B cell (primary cell): ENCODE measurements at regions of chr2 and their contacts with region 1.

Region 1: DNA sequence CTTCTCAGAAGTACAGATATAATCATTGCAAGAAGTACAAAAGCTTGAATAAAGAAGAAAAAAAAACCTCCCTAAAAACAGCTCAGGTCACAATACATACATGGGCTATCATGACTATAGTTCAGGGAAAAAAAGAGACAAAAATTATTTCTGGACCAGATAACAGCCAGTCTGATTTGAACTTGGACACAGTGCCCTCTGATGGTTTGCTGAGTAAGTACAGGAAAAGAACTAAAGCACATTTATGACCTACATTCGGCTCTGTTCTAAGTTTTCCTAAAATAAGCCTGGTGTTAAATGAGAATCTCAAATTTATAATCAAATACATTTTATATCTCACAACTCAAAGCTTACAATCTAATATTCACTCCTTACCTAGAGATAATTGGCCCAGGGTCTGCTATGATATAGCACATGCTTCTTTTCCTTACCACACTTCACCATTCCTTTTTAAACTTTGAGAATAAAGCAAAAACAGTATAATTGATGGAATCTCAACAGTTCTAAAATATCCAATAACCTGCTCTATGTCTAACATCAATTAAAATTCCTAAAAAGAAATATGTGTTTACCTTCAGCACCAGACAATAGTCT is 81.1 kb downstream of the RAPH1 start:
- DNase-seq: peak; percentile 46
- ATAC-seq: no peak
- H3K4me3 ChIP-seq: no peak overlapping the region
- H3K4me3 Mint-ChIP-seq: no peak overlapping the region
- H3K27ac ChIP-seq: no peak overlapping the region
- H3K27ac Mint-ChIP-seq: no peak overlapping the region
- H3K4me1 ChIP-seq: no peaks in the 10 kb centered on the region
- H3K4me1 Mint-ChIP-seq: no peaks in the 10 kb centered on the region
- H3K27me3 ChIP-seq: no peaks in the 10 kb centered on the region
- H3K27me3 Mint-ChIP-seq: no peaks in the 10 kb centered on the region
- CTCF ChIP-seq: peak; percentile 84

Region 2: DNA sequence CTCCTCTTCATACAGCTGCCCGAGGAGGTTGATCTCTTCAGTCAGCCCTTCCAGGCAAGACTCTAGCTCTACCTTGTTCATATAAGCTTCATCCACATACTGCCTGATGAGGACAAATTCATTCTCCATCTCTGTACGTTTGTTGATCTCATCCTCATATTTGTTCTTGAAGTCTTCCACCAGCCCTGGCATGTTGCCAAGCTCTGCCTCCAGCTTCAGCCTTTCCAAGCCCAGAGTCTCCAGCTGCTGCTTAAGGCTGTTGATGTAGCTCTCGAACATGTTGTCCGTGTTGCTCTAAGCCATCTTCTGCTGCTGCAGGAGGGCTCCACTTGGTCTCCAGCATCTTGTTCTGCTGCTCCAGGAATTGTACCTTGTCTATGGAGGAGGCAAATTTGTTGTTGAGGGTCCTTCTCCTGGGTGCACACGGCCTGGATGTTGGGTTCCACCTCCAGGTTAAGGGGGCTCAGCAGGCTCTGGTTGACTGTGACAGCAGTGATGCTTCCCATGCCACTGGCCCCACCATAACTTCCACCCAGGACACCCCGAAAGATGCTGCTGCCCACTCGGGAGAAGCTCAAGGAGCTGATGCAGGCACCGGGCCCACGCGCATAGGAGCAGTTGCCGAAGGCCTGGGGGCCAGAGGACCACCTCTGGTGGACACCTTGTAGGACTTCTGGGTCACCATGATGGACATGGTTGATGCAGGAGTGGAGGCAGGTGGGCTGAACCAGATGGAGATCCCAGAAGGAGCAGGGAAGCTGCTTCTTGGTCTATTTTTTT is 612.7 kb before region 1 on chr2:
- CTCF ChIA-PET with region 1: no interaction called
- POLR2A ChIA-PET with region 1: no interaction called
- intact Hi-C with region 1: no loop called
- DNase-seq: no peak
- ATAC-seq: no peak
- H3K4me3 ChIP-seq: no peak overlapping the region
- H3K4me3 Mint-ChIP-seq: no peak overlapping the region
- H3K27ac ChIP-seq: no peak overlapping the region
- H3K27ac Mint-ChIP-seq: no peak overlapping the region
- H3K4me1 ChIP-seq: no peaks in the 10 kb centered on the region
- H3K4me1 Mint-ChIP-seq: no peaks in the 10 kb centered on the region
- H3K27me3 ChIP-seq: no peaks in the 10 kb centered on the region
- H3K27me3 Mint-ChIP-seq: no peaks in the 10 kb centered on the region
- CTCF ChIP-seq: no peak

Region 3: DNA sequence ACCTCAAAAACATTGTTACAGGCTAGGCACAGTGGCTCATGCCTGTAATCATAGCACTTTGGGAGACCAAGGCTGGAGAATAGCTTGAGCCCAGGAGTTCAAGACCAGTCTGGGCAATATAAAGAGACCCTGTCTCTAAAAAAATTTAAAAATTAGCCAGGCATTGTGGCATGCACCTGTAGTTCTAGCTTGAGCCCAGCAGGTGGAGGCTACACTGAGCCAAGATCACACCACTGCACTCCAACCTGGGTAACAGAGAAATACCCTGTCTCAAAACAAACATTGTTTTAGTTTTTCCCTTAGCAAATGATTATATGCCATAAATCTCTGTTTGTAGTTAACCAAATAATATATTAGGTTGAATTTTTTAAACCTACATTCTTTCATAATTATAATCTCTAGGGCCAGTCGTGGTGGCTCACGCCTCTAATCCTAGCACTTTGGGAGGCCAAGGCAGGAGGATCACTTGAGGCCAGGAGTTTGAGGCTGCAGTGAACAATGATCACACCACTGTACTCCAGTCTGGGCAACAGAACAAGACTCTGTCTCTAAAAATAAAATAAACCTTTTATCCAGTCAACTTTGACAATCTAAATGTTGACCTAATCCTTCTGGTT is 228.4 kb before region 1 on chr2:
- CTCF ChIA-PET with region 1: interaction called, 23 read pairs
- POLR2A ChIA-PET with region 1: no interaction called
- intact Hi-C with region 1: loop called (anchors 1 kb)
- DNase-seq: peak; percentile 46
- ATAC-seq: peak; percentile 56
- H3K4me3 ChIP-seq: no peak overlapping the region
- H3K4me3 Mint-ChIP-seq: no peak overlapping the region
- H3K27ac ChIP-seq: no peak overlapping the region
- H3K27ac Mint-ChIP-seq: no peak overlapping the region
- H3K4me1 ChIP-seq: no peaks in the 10 kb centered on the region
- H3K4me1 Mint-ChIP-seq: no peaks in the 10 kb centered on the region
- H3K27me3 ChIP-seq: no peaks in the 10 kb centered on the region
- H3K27me3 Mint-ChIP-seq: no peaks in the 10 kb centered on the region
- CTCF ChIP-seq: peak; percentile 80

Region 4: GRCh38 chr2:203535078-203535783 is 81.3 kb after region 1 on chr2 and contains the start of gene RAPH1:
- CTCF ChIA-PET with region 1: no interaction called
- POLR2A ChIA-PET with region 1: no interaction called
- intact Hi-C with region 1: no loop called
- DNase-seq: peak; percentile 49
- ATAC-seq: peak; percentile 54
- H3K4me3 ChIP-seq: peak within 1 kb of the TSS; percentile 17 to 62 (median 48)
- H3K4me3 Mint-ChIP-seq: peak within 1 kb of the TSS; percentile 88
- H3K27ac ChIP-seq: no peak within 1 kb of the TSS
- H3K27ac Mint-ChIP-seq: no peak within 1 kb of the TSS
- H3K4me1 ChIP-seq: peaks cover 14 to 25% of the 10 kb centered on the region in 2 donors
- H3K4me1 Mint-ChIP-seq: peaks cover 19% of the 10 kb centered on the region
- H3K27me3 ChIP-seq: peaks cover 3 to 47% (median 42%) of the 10 kb centered on the region in 4 experiments
- H3K27me3 Mint-ChIP-seq: peaks cover 74% of the 10 kb centered on the region
- CTCF ChIP-seq: no peak
- total RNA-seq, gene RAPH1: 0.05 TPM in 1 of 2 replicates, not detected in the other